A549 (cell line): ENCODE measurements at regions of chr16 and their contacts with region 1.

Region 1: DNA sequence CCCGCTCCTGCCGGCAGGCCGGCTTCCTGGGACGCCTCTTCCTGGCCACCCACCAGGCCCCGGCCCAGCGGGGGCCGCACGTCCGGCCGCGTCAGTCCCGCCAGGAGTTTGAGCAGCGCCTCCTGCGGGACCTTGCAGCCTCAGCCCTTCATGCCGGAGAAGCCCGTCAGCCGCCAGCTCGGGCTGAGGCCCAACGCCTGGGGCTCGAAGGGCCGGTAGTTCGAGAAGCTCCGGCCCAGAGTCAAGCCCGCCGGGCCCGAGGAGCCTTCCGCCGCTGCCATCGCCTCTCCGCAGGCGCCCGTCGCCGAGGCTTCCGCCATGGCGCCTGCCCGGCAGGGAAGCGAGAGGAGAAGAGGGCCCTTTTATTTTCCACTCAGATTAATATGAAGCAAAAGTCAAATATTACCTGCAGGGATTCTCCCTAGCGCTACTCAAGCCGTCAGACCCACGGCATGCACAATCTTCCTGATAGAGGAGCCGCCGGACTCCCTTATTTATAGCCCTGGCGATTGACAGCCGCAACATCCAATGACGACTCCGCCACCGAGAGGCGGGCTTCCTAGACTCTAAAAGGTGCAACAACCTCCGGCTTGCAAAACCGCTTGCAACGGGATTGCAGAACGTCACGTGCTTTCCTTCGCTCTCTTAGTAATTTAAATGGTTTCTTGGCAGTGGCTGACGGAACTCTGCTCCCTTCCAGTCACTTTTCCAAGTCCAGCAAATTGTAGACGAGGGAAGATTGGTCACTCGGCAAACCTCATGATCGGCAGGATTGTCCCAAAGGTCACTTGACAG is at the start of gene SEPHS2:
- DNase-seq: peak; percentile 92 to 98
- ATAC-seq: peak; percentile 94 to 95
- H3K4me3 ChIP-seq: peak within 1 kb of the TSS; percentile 84
- H3K27ac ChIP-seq: peak within 1 kb of the TSS; percentile 91 to 99
- H3K4me1 ChIP-seq: peaks cover 19% of the 10 kb centered on the region
- CTCF ChIP-seq: peak; percentile 40
- EP300 ChIP-seq: no peak
- POLR2A ChIP-seq: peak; percentile 79
- RAD21 ChIP-seq: peak in 1 of 2 experiments; percentile 18; a peak in 1 of 5 replicates
- polyA plus RNA-seq, gene SEPHS2: 61.5 and 72.6 TPM in 2 replicates

Region 2: DNA sequence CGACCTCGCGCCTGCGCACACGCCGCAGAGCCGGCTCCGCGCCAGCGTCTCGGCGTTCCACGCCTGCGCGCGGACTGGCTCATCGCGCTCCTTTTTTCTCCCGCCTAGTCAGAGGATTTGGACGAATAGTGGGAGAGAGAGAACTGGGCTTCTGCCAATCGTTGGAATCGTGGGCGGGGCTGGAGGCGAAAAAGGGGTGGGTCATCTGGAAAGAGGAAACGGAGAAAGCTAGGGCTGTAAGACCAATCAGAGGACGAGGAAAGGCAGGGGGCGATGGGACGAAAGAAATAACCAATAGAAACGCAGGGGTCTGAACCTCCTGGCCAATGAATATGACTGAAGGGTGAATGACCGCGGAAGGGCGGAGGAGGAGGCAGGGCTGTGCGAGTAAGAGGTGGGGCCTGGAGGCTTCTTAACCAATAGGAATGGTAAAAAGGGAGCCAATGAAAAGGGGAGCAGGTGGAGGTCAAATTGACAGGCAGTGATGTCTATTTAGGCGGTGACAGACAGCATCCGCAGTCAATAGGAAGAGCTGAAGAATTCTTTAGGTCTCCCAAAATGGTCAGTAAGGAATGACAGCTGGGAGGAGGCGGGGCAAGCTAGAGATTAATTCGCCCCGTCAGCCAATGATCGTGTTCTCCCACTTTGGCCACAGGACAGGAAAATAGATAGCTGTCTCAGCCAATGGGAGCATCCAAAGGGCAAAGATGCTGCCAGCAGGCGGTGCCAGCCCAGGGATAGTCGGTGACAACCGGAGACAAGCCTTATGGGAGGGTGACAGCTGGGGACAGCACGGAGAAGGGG is 75.0 kb before region 1 on chr16 and contains the start of gene TBC1D10B:
- CTCF ChIA-PET with region 1: no interaction called
- POLR2A ChIA-PET with region 1: no interaction called
- DNase-seq: peak; percentile 100
- ATAC-seq: peak; percentile 87 to 94
- H3K4me3 ChIP-seq: peak within 1 kb of the TSS; percentile 76
- H3K27ac ChIP-seq: peak within 1 kb of the TSS; percentile 96 to 98
- H3K4me1 ChIP-seq: peaks cover 20% of the 10 kb centered on the region
- CTCF ChIP-seq: no peak
- EP300 ChIP-seq: no peak
- POLR2A ChIP-seq: peak; percentile 31
- RAD21 ChIP-seq: no peak
- polyA plus RNA-seq, gene TBC1D10B: 10.9 and 12.6 TPM in 2 replicates

Region 3: DNA sequence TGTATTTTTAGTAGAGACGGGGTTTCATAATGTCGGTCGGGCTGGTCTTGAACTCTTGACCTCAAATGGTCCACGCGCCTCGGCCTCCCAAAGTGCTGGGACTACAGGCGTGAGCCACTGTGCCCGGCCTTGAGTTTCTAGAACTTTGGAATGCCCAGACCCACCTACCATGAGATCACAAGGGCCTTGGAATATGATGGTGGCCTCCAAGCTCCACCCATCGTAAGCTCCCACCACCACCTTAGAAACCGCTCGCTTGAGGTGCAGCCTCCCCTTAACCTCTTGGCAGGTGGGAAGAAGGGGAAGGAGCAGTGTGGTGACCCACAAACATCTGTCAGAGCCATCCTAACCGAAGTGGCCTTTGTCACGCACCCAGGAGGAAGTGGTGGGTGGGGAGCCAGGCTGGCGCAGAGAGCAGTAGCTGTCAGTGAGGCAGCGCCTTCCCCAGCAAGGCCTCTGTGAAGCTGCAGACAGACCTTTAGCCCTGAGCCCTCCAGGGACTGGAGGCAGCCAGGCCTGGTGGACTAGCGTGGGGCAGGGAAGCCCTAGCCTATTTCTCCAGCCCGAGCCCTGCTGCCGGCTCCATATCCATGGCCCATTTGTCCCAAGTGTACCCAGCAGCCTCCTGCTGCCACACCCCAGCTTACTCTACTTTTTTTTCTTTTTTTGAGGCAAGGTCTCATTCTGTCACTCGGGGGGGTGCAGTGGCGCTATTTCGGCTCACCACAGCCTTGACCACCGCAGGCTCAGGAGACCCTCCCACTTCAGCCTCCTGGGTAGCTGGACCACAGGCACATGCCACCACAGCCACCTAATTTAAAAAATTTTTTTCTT is 13.2 kb after region 1 on chr16:
- CTCF ChIA-PET with region 1: interaction called, 11 read pairs
- POLR2A ChIA-PET with region 1: interaction called, 6 read pairs
- DNase-seq: no peak
- ATAC-seq: no peak
- H3K4me3 ChIP-seq: no peak overlapping the region
- H3K27ac ChIP-seq: no peak overlapping the region
- H3K4me1 ChIP-seq: no peaks in the 10 kb centered on the region
- CTCF ChIP-seq: no peak
- EP300 ChIP-seq: no peak
- POLR2A ChIP-seq: no peak
- RAD21 ChIP-seq: no peak

Region 4: DNA sequence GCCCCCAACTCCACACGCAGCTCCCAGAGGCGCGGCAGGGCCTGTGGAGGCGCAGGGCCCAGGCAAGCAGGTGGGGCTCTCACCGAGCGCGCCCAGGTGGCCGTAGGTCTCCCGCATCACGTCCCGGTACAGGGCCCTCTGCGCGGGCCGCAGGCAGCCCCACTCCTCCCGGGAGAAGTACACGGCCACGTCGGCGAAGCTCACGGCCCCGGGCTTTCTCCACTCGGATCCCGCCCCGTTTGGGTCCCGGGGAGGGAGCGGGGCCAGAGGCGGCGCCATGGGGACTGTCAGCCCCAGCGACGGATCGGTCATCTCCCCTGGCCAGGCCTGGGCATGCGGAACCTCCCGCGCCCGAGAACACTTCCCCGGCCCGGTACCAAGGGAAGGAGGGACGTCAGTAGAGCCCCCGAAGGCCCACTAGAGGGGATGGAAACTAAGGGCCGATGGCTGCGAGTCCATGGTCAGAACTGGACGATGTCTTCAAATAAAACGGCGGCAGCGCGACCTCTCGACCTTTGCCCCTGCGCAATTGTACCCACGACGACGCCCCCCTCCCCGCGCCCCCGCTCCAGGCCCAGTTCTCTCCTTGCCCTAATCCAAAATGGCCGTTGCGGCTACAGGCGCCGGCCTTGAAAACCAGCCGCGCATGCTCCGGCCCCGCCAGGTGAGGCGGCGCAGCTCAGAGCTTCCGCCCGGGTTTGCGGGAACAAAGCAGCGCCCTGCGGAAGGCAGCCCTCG is 88.9 kb after region 1 on chr16 and contains the start of gene ZNF747:
- CTCF ChIA-PET with region 1: interaction called, 11 read pairs
- POLR2A ChIA-PET with region 1: interaction called, 5 read pairs
- DNase-seq: peak; percentile 77 to 90
- ATAC-seq: peak; percentile 91 to 93
- H3K4me3 ChIP-seq: peak within 1 kb of the TSS; percentile 52
- H3K27ac ChIP-seq: peak within 1 kb of the TSS; percentile 89 to 93
- H3K4me1 ChIP-seq: peaks cover 13% of the 10 kb centered on the region; the same call in 2 of the 3 replicates
- CTCF ChIP-seq: no peak
- EP300 ChIP-seq: no peak
- POLR2A ChIP-seq: peak; percentile 72
- RAD21 ChIP-seq: no peak; a peak in 1 of 5 replicates
- polyA plus RNA-seq, gene ZNF747: 4.8 and 5.2 TPM in 2 replicates

Region 5: GRCh38 chr16:30621765-30622164 is 176.2 kb after region 1 on chr16:
- CTCF ChIA-PET with region 1: interaction called, 24 read pairs
- POLR2A ChIA-PET with region 1: no interaction called
- DNase-seq: no peak
- ATAC-seq: no peak
- H3K4me3 ChIP-seq: no peak overlapping the region
- H3K27ac ChIP-seq: no peak overlapping the region
- H3K4me1 ChIP-seq: no peaks in the 10 kb centered on the region
- CTCF ChIP-seq: no peak
- EP300 ChIP-seq: no peak
- POLR2A ChIP-seq: no peak
- RAD21 ChIP-seq: no peak

Region 6: GRCh38 chr16:30650369-30651123 is 204.9 kb after region 1 on chr16 and contains the start of gene PRR14:
- CTCF ChIA-PET with region 1: interaction called, 4 read pairs
- POLR2A ChIA-PET with region 1: interaction called, 11 read pairs
- DNase-seq: peak; percentile 92 to 99
- ATAC-seq: peak; percentile 88 to 91
- H3K4me3 ChIP-seq: peak within 1 kb of the TSS; percentile 82
- H3K27ac ChIP-seq: peak within 1 kb of the TSS; percentile 92 to 96
- H3K4me1 ChIP-seq: peaks cover 12% of the 10 kb centered on the region; the same call in 2 of the 3 replicates
- CTCF ChIP-seq: no peak
- EP300 ChIP-seq: no peak
- POLR2A ChIP-seq: no peak; the same call in 1 of the 2 replicates
- RAD21 ChIP-seq: no peak
- polyA plus RNA-seq, gene PRR14: 6.3 and 8.4 TPM in 2 replicates